Naive thymus-derived CD4-positive, alpha-beta T cell (primary cell): ENCODE measurements at regions of chr2 and their contacts with region 1.

Region 1: GRCh38 chr2:25794544-25795276 is 83.6 kb downstream of the ASXL2 start:
- DNase-seq: peak in 6 of 9 donors; percentile 33 to 61 (median 47)
- ATAC-seq: peak; percentile 90
- H3K4me3 ChIP-seq: peak overlapping the region; percentile 23
- H3K4me3 Mint-ChIP-seq: peak overlapping the region; percentile 68 to 92 (median 86)
- H3K27ac ChIP-seq: peak overlapping the region; percentile 63
- H3K27ac Mint-ChIP-seq: peak overlapping the region; percentile 87 to 97 (median 95)
- H3K4me1 ChIP-seq: peaks cover 43 to 51% of the 10 kb centered on the region in 2 donors
- H3K4me1 Mint-ChIP-seq: peaks cover 48 to 95% (median 86%) of the 10 kb centered on the region in 7 donors
- H3K27me3 ChIP-seq: no peaks in the 10 kb centered on the region
- H3K27me3 Mint-ChIP-seq: no peaks in the 10 kb centered on the region

Region 2: GRCh38 chr2:25831746-25832449 is 37.2 kb after region 1 on chr2:
- CTCF ChIA-PET with region 1: no interaction called
- POLR2A ChIA-PET with region 1: interaction called, 3 read pairs
- intact Hi-C with region 1: loop called in 1 of 2 experiments (anchors 2 kb)
- DNase-seq: peak in 2 of 9 donors; percentile 12 to 22
- ATAC-seq: peak; percentile 72
- H3K4me3 ChIP-seq: no peak overlapping the region
- H3K4me3 Mint-ChIP-seq: peak overlapping the region in 7 of 10 donors; percentile 28 to 66 (median 50)
- H3K27ac ChIP-seq: no peak overlapping the region
- H3K27ac Mint-ChIP-seq: peak overlapping the region in 7 of 9 donors; percentile 14 to 88 (median 55)
- H3K4me1 ChIP-seq: peaks cover 9 to 11% of the 10 kb centered on the region in 2 donors
- H3K4me1 Mint-ChIP-seq: peaks cover 17 to 63% (median 42%) of the 10 kb centered on the region in 7 donors
- H3K27me3 ChIP-seq: no peaks in the 10 kb centered on the region
- H3K27me3 Mint-ChIP-seq: no peaks in the 10 kb centered on the region

Region 3: DNA sequence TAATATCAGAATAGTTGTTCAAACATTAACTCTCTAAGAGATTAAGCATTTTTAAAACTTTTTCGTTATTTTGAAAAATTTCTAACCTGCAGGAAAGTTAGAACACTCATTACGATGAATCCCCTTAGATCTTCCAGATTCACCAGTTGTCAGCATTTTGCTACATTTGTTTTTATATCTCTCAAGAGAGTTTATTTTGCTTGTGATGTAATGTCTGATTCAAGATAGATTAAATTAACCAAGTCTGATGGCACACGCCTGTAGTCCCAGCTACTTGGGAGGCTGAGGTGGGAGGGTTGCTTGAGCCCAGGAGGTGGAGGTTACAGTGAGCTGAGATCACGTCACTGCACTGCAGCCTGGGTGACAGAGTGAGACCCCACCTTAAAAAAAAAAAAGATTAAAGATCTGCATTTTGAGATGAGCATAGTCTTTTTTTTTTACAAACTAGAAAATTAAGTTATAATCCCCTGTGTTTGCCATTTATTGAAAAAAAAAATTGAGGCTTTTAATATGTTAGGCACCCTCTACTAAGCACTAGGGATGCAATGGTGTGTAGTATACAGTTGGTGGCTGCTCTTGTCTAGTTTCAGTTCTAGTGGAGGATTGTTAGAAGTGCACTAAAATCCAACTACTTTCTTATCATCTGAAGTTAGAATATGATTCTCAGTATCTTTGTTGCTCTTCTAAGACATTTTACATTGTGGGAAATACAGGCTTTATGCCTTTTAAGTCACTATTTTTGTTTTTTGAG is 260.1 kb after region 1 on chr2:
- CTCF ChIA-PET with region 1: no interaction called
- POLR2A ChIA-PET with region 1: no interaction called
- intact Hi-C with region 1: no loop called
- DNase-seq: no peak
- ATAC-seq: no peak
- H3K4me3 ChIP-seq: no peak overlapping the region
- H3K4me3 Mint-ChIP-seq: peak overlapping the region in 2 of 10 donors; percentile 20 to 26
- H3K27ac ChIP-seq: no peak overlapping the region
- H3K27ac Mint-ChIP-seq: peak overlapping the region in 3 of 9 donors; percentile 23 to 62 (median 45)
- H3K4me1 ChIP-seq: peaks cover 4 to 21% of the 10 kb centered on the region in 2 donors
- H3K4me1 Mint-ChIP-seq: peaks cover 34 to 84% (median 74%) of the 10 kb centered on the region in 7 donors
- H3K27me3 ChIP-seq: no peaks in the 10 kb centered on the region
- H3K27me3 Mint-ChIP-seq: no peaks in the 10 kb centered on the region